Aorta (tissue), 5 donors: ENCODE measurements at regions of chr17 and their contacts with region 1.

Region 1: DNA sequence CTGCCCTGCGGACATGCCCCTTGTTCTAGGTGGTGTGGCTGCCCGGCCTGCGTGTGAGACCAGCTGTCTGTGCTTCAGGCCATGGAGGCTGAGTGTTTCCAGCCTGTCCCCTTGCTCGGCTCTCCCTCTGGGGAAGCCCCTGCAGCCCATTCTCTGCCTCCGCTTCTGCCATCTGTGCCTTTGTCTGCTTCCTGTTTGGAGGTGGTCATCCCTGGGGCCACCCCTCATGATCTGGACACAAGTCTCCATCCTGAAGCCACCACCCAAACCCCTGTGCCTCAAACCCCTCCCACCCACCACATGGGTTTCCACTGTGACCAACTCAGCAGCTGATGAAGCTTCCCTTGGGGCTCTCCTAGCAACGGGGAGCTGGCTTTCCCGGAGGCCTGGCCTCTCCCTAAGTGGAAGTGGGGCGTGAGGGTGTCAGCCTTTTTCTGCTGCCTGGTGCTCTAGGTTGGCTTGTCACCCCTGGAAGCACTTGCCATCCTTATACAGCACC is 184.9 kb downstream of the SEC14L1 start:
- DNase-seq: no peak
- ATAC-seq: no peak
- H3K4me3 ChIP-seq: no peak overlapping the region
- H3K27ac ChIP-seq: peak overlapping the region in 1 of 2 donors; percentile 64
- H3K4me1 ChIP-seq: peaks cover 0 to 2% of the 10 kb centered on the region in 2 donors
- H3K27me3 ChIP-seq: no peaks in the 10 kb centered on the region

Region 2: DNA sequence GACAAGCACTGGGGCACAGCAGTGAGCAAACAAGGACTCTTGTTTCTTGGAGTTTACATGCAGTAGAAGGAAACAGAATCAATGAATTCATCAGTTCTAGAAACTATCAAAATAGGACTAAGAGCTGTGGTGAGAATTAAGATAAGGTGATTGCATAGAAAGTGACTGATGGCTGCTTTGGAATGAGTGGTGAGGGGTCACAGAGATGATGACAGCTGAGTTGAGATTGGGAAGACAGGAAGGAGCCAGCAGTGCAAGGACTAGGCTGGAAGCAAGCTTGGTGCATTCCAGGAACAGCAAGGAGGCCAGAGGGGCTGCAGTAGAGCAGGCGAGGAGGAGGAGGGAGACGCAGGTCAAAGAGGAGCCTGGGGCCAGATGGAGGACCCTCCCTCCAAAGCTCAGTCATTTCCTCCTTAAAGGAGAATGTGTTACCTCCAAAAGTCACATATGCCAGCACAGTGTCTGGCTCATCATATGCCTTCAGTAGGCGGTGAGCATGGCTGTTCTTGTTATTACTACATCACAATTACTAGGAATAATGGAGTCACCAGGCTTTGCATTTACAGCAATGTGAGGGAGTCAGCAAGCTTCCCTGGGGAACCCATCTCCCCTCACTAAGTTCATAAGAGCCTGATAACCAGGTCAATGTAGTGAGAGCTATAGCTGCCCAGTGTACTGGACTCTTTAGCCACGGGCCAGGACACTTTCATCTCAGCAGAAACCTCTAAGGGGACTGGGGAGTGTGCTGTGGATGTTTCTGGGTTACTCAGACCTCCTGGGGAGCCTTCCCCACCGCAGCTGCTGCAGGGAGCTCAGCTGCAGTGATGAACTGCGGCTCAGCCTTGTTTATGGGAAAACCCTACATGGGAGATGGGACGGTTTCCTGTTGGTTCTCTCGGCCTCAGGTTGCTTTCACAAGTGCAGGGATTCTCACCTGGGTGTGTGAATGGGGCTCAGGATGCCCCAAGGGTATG is 27.6 kb before region 1 on chr17:
- intact Hi-C with region 1: no loop called
- DNase-seq: no peak
- ATAC-seq: no peak
- H3K4me3 ChIP-seq: no peak overlapping the region
- H3K27ac ChIP-seq: no peak overlapping the region
- H3K4me1 ChIP-seq: no peaks in the 10 kb centered on the region
- H3K27me3 ChIP-seq: no peaks in the 10 kb centered on the region

Region 3: GRCh38 chr17:77365584-77366186 is 40.1 kb after region 1 on chr17:
- intact Hi-C with region 1: loop called in 1 of 2 experiments (anchors 5 kb)
- DNase-seq: peak; percentile 88 to 92
- ATAC-seq: peak; percentile 85
- H3K4me3 ChIP-seq: no peak overlapping the region
- H3K27ac ChIP-seq: peak overlapping the region; percentile 36 to 79
- H3K4me1 ChIP-seq: no peaks in the 10 kb centered on the region
- H3K27me3 ChIP-seq: no peaks in the 10 kb centered on the region